ENCODE measurements at regions of chr1 and their contacts with region 1.

Region 1: DNA sequence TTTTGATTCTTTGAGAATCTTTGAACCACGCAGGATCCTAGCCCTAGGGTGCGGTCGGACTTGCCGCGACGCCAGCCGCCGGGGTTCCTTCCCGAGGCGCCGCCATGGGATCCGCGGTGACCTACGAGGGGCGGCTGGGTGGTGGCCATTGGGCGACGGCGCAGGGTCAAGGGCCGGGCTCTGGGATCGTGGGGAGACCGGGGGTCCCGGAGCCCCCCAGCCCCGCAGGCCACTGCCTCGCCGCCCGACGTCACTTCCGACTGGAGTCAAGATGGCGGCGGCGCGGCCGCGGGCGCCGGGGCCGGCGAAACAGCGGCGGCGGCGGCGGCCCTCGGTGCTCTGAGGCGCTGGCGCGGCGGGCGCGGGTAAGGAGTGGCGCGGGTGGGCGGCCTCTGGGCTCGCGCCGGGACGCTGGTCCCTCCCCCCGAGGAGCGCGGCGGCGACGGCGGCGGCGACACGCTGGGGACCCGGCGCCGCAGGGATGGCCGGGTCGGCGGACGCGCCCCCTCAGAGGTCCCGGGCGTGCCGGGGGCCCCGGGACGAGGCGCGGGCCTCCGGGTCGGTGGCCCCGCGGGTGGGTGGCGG is at the start of gene PRDM2:
- DNase-seq: peak; percentile 55 to 78 (median 74)
- H3K4me3 ChIP-seq: peak within 1 kb of the TSS; percentile 87 to 90
- H3K4me3 Mint-ChIP-seq: peak within 1 kb of the TSS; percentile 95 to 99 (median 98)
- H3K27ac ChIP-seq: peak within 1 kb of the TSS; percentile 92
- H3K27ac Mint-ChIP-seq: peak within 1 kb of the TSS; percentile 98 to 100 (median 100)
- H3K4me1 ChIP-seq: peaks cover 44% of the 10 kb centered on the region
- H3K4me1 Mint-ChIP-seq: peaks cover 37 to 60% (median 43%) of the 10 kb centered on the region in 4 donors
- H3K27me3 ChIP-seq: no peaks in the 10 kb centered on the region
- H3K27me3 Mint-ChIP-seq: peaks cover 0 to 4% of the 10 kb centered on the region in 2 donors
- total RNA-seq, gene PRDM2: 113 to 118 TPM

Region 2: DNA sequence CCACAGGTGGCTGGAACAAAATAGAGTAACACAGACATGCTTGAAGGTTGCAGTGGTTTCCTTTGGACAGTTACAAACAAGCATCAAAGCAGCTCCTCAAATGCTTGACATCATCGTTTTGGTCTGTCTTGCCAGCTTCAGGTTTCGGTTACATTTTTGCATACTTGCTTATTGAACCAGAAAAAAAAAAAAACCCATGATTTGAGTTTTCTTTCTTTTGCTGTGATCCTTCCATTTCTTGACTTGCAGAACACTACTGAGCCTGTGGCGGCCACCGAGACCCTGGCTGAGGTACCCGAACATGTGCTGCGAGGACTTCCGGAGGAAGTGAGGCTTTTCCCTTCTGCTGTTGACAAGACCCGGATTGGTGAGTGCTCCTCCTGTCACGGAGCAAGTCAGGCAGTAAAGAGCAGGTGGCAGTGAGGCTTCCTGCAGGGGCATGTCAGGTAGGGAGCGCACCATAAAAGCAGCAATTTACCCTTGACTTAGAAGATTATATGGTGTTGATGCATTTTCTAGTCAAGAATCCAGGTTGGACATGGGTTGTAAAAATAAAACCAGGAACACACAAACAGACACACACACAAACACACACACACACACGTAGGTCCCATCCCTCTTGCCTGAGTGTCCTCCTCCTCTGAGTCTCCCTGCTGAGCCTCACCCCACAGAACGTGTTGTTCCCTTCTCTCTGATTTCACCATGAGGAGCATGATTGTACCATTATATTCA is 30.9 kb after region 1 on chr1:
- CTCF ChIA-PET with region 1: interaction called, 21 read pairs
- POLR2A ChIA-PET with region 1: interaction called, 31 read pairs
- intact Hi-C with region 1: loop called (anchors 1 kb)
- DNase-seq: peak; percentile 85 to 97 (median 92)
- H3K4me3 ChIP-seq: peak overlapping the region in 1 of 2 donors; percentile 47
- H3K4me3 Mint-ChIP-seq: peak overlapping the region; percentile 73 to 89 (median 84)
- H3K27ac ChIP-seq: peak overlapping the region; percentile 81
- H3K27ac Mint-ChIP-seq: peak overlapping the region; percentile 92 to 100 (median 99)
- H3K4me1 ChIP-seq: peaks cover 62% of the 10 kb centered on the region
- H3K4me1 Mint-ChIP-seq: peaks cover 54 to 93% (median 67%) of the 10 kb centered on the region in 4 donors
- H3K27me3 ChIP-seq: no peaks in the 10 kb centered on the region
- H3K27me3 Mint-ChIP-seq: no peaks in the 10 kb centered on the region

Region 3: GRCh38 chr1:13842497-13842896 is 142.5 kb after region 1 on chr1:
- CTCF ChIA-PET with region 1: no interaction called
- POLR2A ChIA-PET with region 1: no interaction called
- intact Hi-C with region 1: no loop called
- DNase-seq: no peak
- H3K4me3 ChIP-seq: no peak overlapping the region
- H3K4me3 Mint-ChIP-seq: no peak overlapping the region
- H3K27ac ChIP-seq: no peak overlapping the region
- H3K27ac Mint-ChIP-seq: no peak overlapping the region
- H3K4me1 ChIP-seq: no peaks in the 10 kb centered on the region
- H3K4me1 Mint-ChIP-seq: no peaks in the 10 kb centered on the region
- H3K27me3 ChIP-seq: no peaks in the 10 kb centered on the region
- H3K27me3 Mint-ChIP-seq: peaks cover 8 to 17% of the 10 kb centered on the region in 2 donors

Measured in CD4-positive, alpha-beta memory T cell (primary cell).